Heart left ventricle (tissue), 16 donors: ENCODE measurements at regions of chr21 and their contacts with region 1.

Region 1: DNA sequence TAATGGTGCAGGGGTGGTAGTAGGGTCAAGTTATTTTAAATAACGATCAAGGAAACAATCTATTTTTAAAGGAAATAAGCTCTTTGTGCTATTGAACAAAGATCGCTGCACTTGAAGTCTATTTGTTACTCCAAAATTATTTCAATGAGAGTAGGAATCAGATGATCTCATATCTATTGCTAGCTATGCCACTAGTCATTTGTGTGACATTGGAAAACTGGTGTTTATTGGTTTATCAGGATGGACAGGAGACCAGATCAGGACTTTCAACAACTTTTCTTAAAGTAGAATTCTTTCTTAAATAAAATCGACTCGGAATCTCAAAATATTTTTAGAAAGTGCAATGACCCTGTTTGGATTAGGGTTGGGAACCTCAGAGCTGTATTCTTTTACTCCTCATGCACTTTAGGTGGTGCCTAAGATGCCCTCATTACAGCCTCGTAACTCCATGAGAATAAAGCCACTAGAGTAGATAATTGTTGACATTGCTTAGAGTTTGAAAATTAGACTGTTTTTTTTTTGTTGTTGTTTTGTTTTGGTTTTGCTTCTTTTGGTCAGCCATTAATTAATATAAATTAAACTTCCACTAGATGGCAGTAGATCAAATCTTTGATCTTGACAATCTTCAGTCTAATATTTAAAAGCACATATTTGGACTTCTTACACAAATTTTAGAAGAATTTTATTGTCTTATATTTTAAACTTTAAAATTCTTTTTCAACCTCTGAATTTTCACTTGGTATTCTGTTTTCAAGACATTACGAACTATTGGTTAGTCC is 352.4 kb downstream of the USP25 start:
- DNase-seq: no peak
- ATAC-seq: no peak
- H3K4me3 ChIP-seq: peak overlapping the region in 6 of 12 donors; percentile 9 to 45 (median 22)
- H3K27ac ChIP-seq: peak overlapping the region in 3 of 12 donors; percentile 25 to 31 (median 25)
- H3K4me1 ChIP-seq: peaks cover 0 to 10% (median 0%) of the 10 kb centered on the region in 12 donors
- H3K27me3 ChIP-seq: no peaks in the 10 kb centered on the region
- CTCF ChIP-seq: peak; percentile 40 to 68 (median 56)
- POLR2A ChIP-seq: no peak

Region 2: GRCh38 chr21:16194095-16194787 is 112.0 kb after region 1 on chr21:
- intact Hi-C with region 1: loop called in 2 of 10 experiments (anchors 5 to 10 kb)
- DNase-seq: peak; percentile 67 to 78 (median 71)
- ATAC-seq: peak; percentile 89 to 95 (median 93)
- H3K4me3 ChIP-seq: peak overlapping the region; percentile 6 to 63 (median 48)
- H3K27ac ChIP-seq: peak overlapping the region; percentile 19 to 80 (median 68)
- H3K4me1 ChIP-seq: peaks cover 0 to 23% (median 0%) of the 10 kb centered on the region in 12 donors
- H3K27me3 ChIP-seq: no peaks in the 10 kb centered on the region
- CTCF ChIP-seq: peak in 9 of 12 donors; percentile 15 to 59 (median 42)
- POLR2A ChIP-seq: no peak

Region 3: GRCh38 chr21:16315223-16315622 is 233.0 kb after region 1 on chr21:
- intact Hi-C with region 1: loop called in 1 of 10 experiments (anchors 5 kb)
- DNase-seq: no peak
- ATAC-seq: no peak
- H3K4me3 ChIP-seq: no peak overlapping the region
- H3K27ac ChIP-seq: no peak overlapping the region
- H3K4me1 ChIP-seq: no peaks in the 10 kb centered on the region
- H3K27me3 ChIP-seq: no peaks in the 10 kb centered on the region
- CTCF ChIP-seq: no peak
- POLR2A ChIP-seq: no peak

Region 4: DNA sequence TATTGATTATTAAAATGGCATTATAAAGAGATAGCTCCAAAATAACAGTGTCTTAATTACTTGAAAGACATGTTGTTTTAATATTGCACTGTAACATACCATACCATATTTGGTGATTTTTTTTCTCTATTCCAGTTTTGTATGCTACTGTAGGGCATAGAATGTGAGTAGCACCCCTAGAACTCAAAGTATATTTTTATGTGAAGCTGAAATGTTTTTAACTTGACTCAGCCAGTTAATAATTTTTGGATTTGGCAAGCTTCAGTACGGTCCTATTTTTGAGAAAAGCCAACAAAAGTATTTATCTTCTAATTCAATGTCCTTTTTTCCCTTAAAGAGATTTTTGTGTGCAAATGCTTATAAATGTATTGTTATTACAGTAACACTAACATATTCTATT is 241.4 kb after region 1 on chr21:
- intact Hi-C with region 1: loop called in 3 of 10 experiments (anchors 2 to 5 kb)
- DNase-seq: no peak
- ATAC-seq: no peak
- H3K4me3 ChIP-seq: no peak overlapping the region
- H3K27ac ChIP-seq: no peak overlapping the region
- H3K4me1 ChIP-seq: peaks cover 0 to 23% (median 0%) of the 10 kb centered on the region in 12 donors
- H3K27me3 ChIP-seq: no peaks in the 10 kb centered on the region
- CTCF ChIP-seq: no peak
- POLR2A ChIP-seq: no peak

Region 5: DNA sequence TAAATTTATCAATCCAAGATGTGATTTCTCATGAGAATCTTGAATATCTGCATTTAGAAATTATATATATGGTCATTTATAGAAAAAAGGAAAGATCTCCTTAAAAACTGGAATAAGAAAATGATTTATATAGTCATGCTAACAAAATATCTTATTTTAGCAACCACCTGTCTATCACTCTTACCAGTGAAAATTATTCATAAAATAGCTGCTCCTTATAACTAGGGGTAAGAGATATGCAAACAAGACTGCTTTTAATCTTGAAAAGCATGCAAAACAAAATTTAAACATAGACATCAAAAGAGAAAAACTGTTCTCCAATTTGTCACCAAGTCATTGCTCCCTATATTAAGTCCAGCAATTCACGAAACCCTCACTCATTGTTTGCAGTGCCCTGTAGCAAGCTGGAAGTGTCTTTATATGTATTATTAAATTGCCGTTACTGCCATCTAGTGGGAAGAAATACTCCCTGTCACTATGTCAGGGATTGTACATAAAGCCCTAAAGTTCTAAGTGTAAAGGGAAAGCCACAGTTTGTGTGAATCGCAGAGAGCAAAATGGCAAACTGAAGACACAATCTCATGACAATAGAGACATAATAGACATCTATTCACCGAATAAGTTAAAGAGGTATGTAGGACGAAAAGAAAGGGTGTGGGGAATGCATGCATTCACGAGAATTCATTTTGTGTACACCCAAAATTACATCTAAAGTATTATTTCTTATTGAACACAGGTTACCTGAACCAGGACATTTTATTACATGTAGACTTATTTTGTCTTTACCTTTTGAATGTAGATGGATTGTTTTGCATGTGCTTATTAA is 248.1 kb after region 1 on chr21:
- intact Hi-C with region 1: loop called in 9 of 10 experiments (anchors 2 to 5 kb)
- DNase-seq: peak in 1 of 5 donors; percentile 12
- ATAC-seq: peak; percentile 94 to 99 (median 96)
- H3K4me3 ChIP-seq: peak overlapping the region in 7 of 12 donors; percentile 1 to 31 (median 14)
- H3K27ac ChIP-seq: peak overlapping the region in 1 of 12 donors; percentile 7
- H3K4me1 ChIP-seq: peaks cover 0 to 4% (median 0%) of the 10 kb centered on the region in 12 donors
- H3K27me3 ChIP-seq: no peaks in the 10 kb centered on the region
- CTCF ChIP-seq: peak; percentile 57 to 86 (median 79)
- POLR2A ChIP-seq: no peak

Region 6: GRCh38 chr21:16419188-16419921 is 337.1 kb after region 1 on chr21:
- intact Hi-C with region 1: no loop called
- DNase-seq: peak; percentile 78 to 90 (median 85)
- ATAC-seq: peak; percentile 85 to 96 (median 93)
- H3K4me3 ChIP-seq: peak overlapping the region; percentile 11 to 67 (median 54)
- H3K27ac ChIP-seq: peak overlapping the region; percentile 73 to 89 (median 86)
- H3K4me1 ChIP-seq: peaks cover 0 to 18% (median 7%) of the 10 kb centered on the region in 12 donors
- H3K27me3 ChIP-seq: no peaks in the 10 kb centered on the region
- CTCF ChIP-seq: no peak
- POLR2A ChIP-seq: no peak

Region 7: DNA sequence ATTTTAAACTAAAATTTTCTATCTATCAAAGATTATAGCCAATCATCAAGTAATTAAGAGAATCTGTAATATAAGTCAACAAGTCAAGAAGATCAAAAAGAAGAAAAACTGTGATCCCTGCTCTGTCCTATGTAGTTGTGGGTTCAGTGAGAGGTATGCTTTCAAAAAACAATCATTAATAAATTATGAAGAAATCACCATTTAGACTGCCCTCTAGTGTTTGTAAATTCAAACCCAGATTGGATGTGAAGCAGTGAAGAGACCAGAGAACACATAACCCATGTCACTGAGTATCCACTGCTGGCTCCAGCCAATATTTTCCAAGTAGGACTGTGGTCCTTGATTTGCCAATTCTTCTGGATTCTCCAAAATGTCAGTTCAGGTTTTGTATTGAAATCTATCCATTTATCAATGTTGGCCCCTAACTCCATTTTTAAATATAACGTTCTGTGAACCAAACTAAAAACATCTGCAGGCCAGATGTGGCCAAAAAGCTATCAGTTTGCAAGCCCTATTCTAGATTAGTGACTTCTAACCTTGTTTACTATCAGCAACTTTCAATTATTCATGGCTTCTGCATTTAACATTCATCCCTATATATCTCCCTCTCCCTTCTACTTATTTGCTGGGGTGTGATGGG is 963.1 kb after region 1 on chr21:
- intact Hi-C with region 1: loop called in 3 of 10 experiments (anchors 10 kb)
- DNase-seq: no peak
- ATAC-seq: peak in 2 of 4 donors; percentile 37 to 53
- H3K4me3 ChIP-seq: no peak overlapping the region
- H3K27ac ChIP-seq: no peak overlapping the region
- H3K4me1 ChIP-seq: no peaks in the 10 kb centered on the region
- H3K27me3 ChIP-seq: no peaks in the 10 kb centered on the region
- CTCF ChIP-seq: peak; percentile 29 to 61 (median 48)
- POLR2A ChIP-seq: no peak